Tibial artery (tissue), 4 donors: ENCODE measurements at regions of chr9 and their contacts with region 1.

Region 1: GRCh38 chr9:77651203-77651602 is 3.1 kb upstream of the GNA14 start:
- DNase-seq: no peak
- H3K4me3 ChIP-seq: no peak overlapping the region
- H3K27ac ChIP-seq: no peak overlapping the region
- H3K4me1 ChIP-seq: peaks cover 0 to 21% (median 10%) of the 10 kb centered on the region in 4 donors
- H3K27me3 ChIP-seq: peaks cover 0 to 16% of the 10 kb centered on the region in 2 donors
- CTCF ChIP-seq: no peak

Region 2: DNA sequence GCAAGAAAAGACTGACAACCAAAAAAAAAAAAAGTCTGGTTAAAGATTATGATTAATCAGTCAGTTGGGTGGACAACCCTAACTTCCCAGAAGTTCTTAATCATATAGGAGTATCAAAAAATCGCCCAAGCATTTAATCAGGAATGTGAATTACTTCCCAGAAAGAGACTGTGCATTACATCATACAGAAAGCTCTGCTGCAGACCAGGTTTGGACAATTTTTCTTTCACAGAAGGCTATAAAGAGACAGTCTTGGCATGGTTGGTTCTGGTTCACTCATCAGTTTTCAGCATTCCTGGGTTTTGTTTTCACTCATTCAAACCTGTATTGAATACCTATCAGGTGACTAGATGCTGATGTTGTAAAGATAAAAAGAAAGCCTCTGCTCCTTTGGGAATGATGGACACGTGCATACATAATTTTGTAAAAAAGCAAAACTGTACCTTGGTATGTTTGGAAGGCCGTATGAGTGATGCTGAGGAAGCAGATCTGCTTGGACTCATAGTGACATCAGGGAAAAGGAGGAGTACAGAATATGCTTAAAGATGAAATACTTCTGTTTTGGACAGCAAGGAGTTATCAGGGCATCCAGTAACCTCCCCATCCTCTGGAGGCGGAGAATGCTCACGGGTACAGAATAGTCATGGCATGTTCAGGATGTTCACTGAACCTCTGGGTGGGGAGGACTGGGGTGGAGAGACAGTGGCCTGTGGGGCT is 181.5 kb before region 1 on chr9:
- intact Hi-C with region 1: loop called (anchors 10 kb)
- DNase-seq: no peak
- H3K4me3 ChIP-seq: no peak overlapping the region
- H3K27ac ChIP-seq: no peak overlapping the region
- H3K4me1 ChIP-seq: no peaks in the 10 kb centered on the region
- H3K27me3 ChIP-seq: no peaks in the 10 kb centered on the region
- CTCF ChIP-seq: no peak

Region 3: GRCh38 chr9:77848897-77849296 is 197.7 kb after region 1 on chr9:
- intact Hi-C with region 1: no loop called
- DNase-seq: peak; percentile 92
- H3K4me3 ChIP-seq: no peak overlapping the region
- H3K27ac ChIP-seq: peak overlapping the region; percentile 72 to 82
- H3K4me1 ChIP-seq: peaks cover 0 to 68% (median 55%) of the 10 kb centered on the region in 4 donors
- H3K27me3 ChIP-seq: no peaks in the 10 kb centered on the region
- CTCF ChIP-seq: no peak